ENCODE measurements at regions of chr5 and their contacts with region 1.

Region 1: DNA sequence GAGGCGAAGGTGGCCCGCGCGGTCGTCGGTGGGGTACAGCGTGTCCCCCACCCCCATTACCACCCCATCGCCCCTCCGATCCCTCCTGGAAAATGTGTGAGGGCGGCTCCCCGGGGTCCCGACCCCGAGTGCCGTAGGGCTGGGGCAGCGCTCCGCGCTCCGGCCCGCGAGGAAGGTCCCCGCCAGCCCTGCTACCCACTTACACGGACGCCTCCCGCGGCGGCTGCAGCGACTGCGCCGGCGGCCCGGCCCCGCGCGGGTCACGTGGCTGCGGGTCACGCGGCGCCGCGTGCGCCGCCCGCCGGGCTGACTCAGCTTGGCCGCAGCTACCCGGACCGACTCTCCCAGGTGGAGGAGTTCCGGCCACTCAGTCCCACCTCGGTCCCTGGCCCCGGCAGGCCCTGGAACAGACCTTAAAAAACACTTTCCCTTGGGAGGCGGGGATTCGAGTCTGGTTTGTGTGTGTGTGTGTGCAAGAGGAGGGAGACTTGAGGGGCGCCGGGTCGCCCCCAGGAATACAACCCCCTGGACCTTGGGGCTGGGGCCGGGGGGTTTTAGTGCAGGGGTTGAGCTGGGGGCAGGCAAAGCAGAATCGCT is at the start of gene GNPDA1:
- DNase-seq: peak; percentile 94
- H3K4me3 ChIP-seq: peak within 1 kb of the TSS; percentile 78 to 85
- H3K27ac ChIP-seq: peak within 1 kb of the TSS; percentile 64 to 84
- H3K4me1 ChIP-seq: peaks cover 17 to 24% of the 10 kb centered on the region in 2 experiments
- H3K27me3 ChIP-seq: no peaks in the 10 kb centered on the region
- CTCF ChIP-seq: no peak
- EP300 ChIP-seq: peak in 1 of 2 experiments; percentile 20; a peak in 1 of 4 replicates
- RAD21 ChIP-seq: no peak
- polyA plus RNA-seq, gene GNPDA1: 23.9 and 27.4 TPM in 2 replicates

Region 2: DNA sequence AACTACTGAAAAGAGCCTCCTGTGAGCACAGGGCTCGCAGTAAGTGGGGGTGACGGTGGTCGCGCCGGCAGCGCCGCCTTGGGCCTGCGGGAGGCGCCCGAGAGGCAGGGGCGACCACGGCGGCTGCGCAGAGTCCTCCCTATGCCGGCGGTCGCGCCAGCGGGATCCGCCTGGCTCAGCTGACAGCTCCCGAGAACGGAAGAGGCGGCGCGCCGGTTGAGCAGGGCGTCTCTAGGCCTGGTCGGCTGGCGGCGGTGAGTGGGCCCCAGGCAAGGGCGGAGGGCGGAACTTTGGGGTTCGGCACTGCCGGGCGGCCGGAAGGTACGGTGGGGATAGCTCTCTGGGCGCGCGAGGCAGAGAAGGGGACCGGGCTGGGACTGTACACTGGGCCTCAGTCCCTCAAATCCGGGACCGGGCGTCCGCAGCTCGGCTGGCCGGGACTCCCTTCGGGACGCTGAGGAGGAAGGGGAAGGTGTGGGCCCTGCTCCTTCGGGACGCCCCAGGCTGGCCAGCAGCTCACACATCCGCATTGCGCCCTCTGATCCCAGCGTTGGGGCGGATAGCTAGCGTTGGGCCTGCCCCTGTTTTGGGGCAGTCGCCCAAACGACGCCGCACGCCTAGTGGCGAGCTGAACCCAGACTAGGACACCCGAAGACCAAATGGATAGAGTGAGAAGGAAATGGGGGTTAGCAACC is 43.8 kb before region 1 on chr5 and contains the start of gene RNF14:
- CTCF ChIA-PET with region 1: interaction called, 13 read pairs
- POLR2A ChIA-PET with region 1: interaction called, 5 read pairs
- DNase-seq: peak; percentile 97
- H3K4me3 ChIP-seq: peak within 1 kb of the TSS; percentile 81 to 85
- H3K27ac ChIP-seq: peak within 1 kb of the TSS; percentile 84 to 90
- H3K4me1 ChIP-seq: peaks cover 7 to 13% of the 10 kb centered on the region in 2 experiments; a peak in 3 of 4 replicates
- H3K27me3 ChIP-seq: no peaks in the 10 kb centered on the region
- CTCF ChIP-seq: peak; percentile 79
- EP300 ChIP-seq: no peak
- RAD21 ChIP-seq: no peak
- polyA plus RNA-seq, gene RNF14: 24.5 and 26.3 TPM in 2 replicates

Region 3: GRCh38 chr5:141992349-141992963 is 20.4 kb before region 1 on chr5:
- CTCF ChIA-PET with region 1: interaction called, 72 read pairs
- POLR2A ChIA-PET with region 1: no interaction called
- DNase-seq: peak; percentile 65
- H3K4me3 ChIP-seq: no peak overlapping the region; a peak in 1 of 4 replicates
- H3K27ac ChIP-seq: no peak overlapping the region
- H3K4me1 ChIP-seq: no peaks in the 10 kb centered on the region
- H3K27me3 ChIP-seq: no peaks in the 10 kb centered on the region
- CTCF ChIP-seq: peak; percentile 90
- EP300 ChIP-seq: no peak
- RAD21 ChIP-seq: peak; percentile 75

Region 4: DNA sequence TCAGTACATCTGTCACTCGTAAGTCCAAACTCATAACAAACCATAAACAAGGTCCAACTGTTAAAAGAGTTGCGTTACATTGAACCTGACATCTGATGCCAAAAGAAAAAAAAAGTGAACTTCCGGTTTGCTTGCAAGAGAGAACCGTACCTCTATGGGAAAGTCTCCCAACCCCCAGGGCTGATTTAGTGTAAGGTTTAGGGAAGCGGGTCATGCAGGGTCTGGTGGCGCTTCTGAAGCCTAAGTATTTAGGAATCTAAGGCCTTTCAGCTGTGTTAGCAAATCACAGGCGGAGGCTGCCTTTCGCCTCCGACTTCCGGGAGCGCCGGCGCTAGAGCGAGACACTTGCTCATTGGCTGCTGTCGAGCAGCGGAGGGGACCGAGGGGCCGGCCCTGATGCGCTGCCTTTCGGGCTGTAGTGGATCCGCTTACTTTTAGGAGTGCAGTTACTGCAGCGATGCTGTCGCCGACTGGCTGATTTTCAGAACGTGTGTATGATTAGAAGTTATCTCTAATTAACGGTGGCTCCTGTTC is 11.9 kb after region 1 on chr5:
- CTCF ChIA-PET with region 1: interaction called, 38 read pairs
- POLR2A ChIA-PET with region 1: interaction called, 6 read pairs
- DNase-seq: peak; percentile 93
- H3K4me3 ChIP-seq: peak overlapping the region; percentile 47 to 56
- H3K27ac ChIP-seq: peak overlapping the region; percentile 72 to 98
- H3K4me1 ChIP-seq: peaks cover 3 to 7% of the 10 kb centered on the region in 2 experiments; a peak in 3 of 4 replicates
- H3K27me3 ChIP-seq: no peaks in the 10 kb centered on the region
- CTCF ChIP-seq: no peak
- EP300 ChIP-seq: no peak
- RAD21 ChIP-seq: no peak

Region 5: DNA sequence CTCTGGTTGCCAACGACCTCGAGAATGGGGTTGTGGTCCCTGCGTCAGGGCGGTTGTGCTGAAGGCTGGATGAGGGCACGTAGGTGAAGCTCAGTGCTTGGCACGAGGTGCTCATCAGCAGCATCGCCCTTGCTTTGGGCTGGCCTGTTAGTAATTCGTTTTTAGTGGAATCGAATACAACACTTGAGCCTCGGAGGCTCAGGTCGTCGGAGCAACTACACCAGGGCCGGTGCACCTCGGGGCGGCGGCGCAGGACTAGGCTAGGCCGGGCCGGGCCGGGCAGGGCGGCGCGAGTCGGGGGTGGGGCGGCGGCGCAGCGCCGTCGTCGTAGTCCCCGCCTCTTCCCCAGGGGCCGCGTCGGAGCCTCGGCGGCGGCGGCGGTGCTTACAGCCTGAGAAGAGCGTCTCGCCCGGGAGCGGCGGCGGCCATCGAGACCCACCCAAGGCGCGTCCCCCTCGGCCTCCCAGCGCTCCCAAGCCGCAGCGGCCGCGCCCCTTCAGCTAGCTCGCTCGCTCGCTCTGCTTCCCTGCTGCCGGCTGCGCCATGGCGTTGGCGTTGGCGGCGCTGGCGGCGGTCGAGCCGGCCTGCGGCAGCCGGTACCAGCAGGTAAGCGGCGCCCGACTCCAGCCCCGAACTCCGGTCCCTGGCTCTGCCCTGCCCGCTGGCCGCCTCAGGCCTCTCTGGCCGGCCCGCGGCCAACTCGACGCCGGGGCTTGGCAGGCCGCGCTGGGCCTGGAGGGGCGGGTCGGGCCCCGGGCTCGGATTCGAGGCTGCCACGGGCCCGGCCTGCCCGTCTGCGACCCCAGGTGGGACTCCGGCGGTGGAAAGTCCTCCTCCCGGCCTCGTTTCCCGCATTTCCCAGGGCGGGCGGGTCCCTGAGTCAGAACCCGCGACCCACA is 95.8 kb after region 1 on chr5 and contains the start of gene NDFIP1:
- CTCF ChIA-PET with region 1: interaction called, 35 read pairs
- POLR2A ChIA-PET with region 1: interaction called, 6 read pairs
- DNase-seq: peak; percentile 93
- H3K4me3 ChIP-seq: peak within 1 kb of the TSS; percentile 90 to 98
- H3K27ac ChIP-seq: peak within 1 kb of the TSS; percentile 85 to 93
- H3K4me1 ChIP-seq: peaks cover 5 to 12% of the 10 kb centered on the region in 2 experiments; a peak in 3 of 4 replicates
- H3K27me3 ChIP-seq: no peaks in the 10 kb centered on the region
- CTCF ChIP-seq: no peak
- EP300 ChIP-seq: peak in 1 of 2 experiments; percentile 39; a peak in 1 of 4 replicates
- RAD21 ChIP-seq: peak; percentile 24; the same call in 1 of the 2 replicates
- polyA plus RNA-seq, gene NDFIP1: 25.5 and 40.0 TPM in 2 replicates

Region 6: DNA sequence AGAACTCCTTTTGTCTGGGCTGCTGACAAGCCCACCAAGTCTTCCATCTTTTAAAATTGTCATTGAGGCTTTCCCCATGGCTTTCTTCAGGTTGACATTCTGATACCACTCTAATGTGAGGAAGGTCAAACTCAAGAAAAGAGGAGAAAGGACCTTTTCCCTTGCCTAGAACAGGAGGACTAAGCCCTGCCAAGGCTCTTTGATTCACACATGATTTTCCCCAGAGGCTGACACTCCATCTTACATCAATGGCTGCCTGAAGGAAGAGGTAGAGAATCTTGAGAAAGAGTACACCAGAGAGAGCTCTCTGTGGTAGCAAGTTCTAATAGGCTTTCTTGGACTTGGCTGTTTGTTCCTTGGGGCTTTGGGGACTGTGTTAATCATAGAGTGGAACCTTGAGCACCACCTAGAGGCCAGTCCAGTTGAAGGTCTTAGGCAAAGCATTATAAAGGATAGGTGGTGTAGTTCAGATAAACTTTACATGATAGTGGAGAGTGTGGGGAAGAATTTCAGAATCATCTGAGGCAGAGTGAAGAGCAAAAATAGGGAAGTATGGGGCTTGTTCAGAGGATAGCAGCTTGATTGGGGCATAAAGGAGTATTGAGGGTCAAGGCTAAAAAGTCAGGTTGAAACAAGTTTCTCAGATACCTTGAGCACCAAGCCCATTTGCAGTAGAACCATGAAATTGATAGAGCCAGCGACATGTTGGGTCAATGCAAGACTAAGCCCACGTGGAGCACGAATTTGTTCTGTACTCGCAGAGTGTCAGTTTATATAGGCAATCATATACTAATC is 132.4 kb after region 1 on chr5:
- CTCF ChIA-PET with region 1: interaction called, 158 read pairs
- POLR2A ChIA-PET with region 1: interaction called, 5 read pairs
- DNase-seq: peak; percentile 57
- H3K4me3 ChIP-seq: no peak overlapping the region; a peak in 1 of 4 replicates
- H3K27ac ChIP-seq: no peak overlapping the region
- H3K4me1 ChIP-seq: peaks cover 0 to 4% of the 10 kb centered on the region in 2 experiments; a peak in 2 of 4 replicates
- H3K27me3 ChIP-seq: no peaks in the 10 kb centered on the region
- CTCF ChIP-seq: peak; percentile 86
- EP300 ChIP-seq: no peak
- RAD21 ChIP-seq: peak; percentile 71

Region 7: DNA sequence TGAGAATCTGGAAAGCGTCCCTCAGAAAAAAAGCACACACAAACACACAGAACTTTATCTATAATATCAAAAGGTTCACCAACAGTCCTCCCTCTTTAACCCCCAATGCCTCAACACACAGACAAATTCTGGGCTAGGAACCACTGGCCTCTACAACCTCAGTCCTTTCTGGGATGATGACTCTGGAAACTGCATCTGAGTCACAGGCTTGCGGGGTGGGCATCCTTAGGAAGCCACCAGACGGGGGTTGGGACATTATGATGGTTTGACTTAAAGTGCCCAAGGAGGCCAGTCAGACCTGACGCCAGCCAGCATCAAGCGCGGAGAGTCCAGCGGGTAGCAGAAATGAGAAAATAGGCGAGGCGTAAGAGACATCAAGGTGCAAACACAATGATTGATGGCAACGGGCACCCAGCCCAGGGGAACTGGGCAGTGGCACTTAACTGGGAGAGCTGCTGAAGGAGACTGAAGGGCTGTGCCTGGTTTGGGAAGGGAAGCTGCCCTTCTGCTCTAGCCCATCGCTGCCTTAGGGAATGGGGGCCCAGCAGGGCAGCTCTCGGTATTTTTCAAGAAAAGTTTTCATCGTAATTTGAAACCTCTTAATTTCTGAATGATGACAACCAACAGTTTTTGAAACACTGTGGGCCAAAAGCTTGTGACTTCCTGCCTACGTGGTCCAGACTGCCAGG is 291.3 kb after region 1 on chr5:
- CTCF ChIA-PET with region 1: no interaction called
- POLR2A ChIA-PET with region 1: no interaction called
- DNase-seq: no peak
- H3K4me3 ChIP-seq: no peak overlapping the region
- H3K27ac ChIP-seq: peak overlapping the region in 1 of 2 experiments; percentile 44; a peak in 3 of 4 replicates
- H3K4me1 ChIP-seq: peaks cover 15 to 30% of the 10 kb centered on the region in 2 experiments; a peak in 3 of 4 replicates
- H3K27me3 ChIP-seq: no peaks in the 10 kb centered on the region
- CTCF ChIP-seq: no peak
- EP300 ChIP-seq: no peak
- RAD21 ChIP-seq: no peak

Measured in SK-N-SH (cell line).